Ovary (tissue), 10 donors: ENCODE measurements at regions of chr15 and their contacts with region 1.

Region 1: DNA sequence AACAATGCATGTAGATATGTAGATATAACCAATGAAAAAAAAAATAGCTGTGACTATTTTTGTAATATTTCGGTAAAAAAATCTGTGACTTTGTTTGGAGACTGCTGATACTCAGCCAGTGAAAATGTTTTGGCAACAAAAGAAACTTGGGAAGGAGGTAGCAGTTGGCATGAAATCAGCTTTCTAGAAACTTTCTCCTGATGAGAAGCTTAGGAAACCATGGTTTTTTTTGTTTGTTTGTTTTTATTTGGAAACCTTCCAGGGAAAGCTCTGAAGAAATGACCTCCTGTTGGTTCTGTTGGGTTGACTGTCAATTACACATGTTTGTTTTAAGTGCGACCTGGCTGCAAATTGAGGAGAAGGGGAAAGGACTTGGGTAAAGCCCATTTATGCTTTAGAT is 445.9 kb downstream of the UNC13C start:
- DNase-seq: no peak
- H3K4me3 ChIP-seq: no peak overlapping the region
- H3K27ac ChIP-seq: no peak overlapping the region
- H3K4me1 ChIP-seq: no peaks in the 10 kb centered on the region
- H3K27me3 ChIP-seq: no peaks in the 10 kb centered on the region
- CTCF ChIP-seq: no peak
- EP300 ChIP-seq: no peak
- POLR2A ChIP-seq: no peak

Region 2: DNA sequence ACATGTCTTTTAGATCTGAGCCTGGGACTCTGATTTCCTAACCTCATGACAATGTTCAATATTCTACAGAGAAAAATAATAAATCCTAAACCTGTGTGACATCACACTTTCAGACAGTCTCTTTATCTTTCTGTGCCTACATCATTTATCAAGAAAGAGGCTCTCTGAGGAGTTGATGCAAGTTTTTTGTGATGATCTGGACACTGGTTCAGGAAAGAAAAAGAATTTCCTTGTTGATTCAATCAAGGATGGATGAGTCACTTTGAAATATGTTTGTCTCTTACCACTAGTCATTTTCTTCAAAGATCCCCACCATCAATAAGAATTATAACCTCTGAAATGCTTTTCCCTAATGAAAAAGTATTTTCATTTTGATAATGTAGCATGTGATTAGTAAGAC is 1069.3 kb before region 1 on chr15:
- intact Hi-C with region 1: loop called in 1 of 4 experiments (anchors 5 kb)
- DNase-seq: no peak
- H3K4me3 ChIP-seq: no peak overlapping the region
- H3K27ac ChIP-seq: no peak overlapping the region
- H3K4me1 ChIP-seq: no peaks in the 10 kb centered on the region
- H3K27me3 ChIP-seq: no peaks in the 10 kb centered on the region
- CTCF ChIP-seq: no peak
- EP300 ChIP-seq: no peak
- POLR2A ChIP-seq: no peak

Region 3: DNA sequence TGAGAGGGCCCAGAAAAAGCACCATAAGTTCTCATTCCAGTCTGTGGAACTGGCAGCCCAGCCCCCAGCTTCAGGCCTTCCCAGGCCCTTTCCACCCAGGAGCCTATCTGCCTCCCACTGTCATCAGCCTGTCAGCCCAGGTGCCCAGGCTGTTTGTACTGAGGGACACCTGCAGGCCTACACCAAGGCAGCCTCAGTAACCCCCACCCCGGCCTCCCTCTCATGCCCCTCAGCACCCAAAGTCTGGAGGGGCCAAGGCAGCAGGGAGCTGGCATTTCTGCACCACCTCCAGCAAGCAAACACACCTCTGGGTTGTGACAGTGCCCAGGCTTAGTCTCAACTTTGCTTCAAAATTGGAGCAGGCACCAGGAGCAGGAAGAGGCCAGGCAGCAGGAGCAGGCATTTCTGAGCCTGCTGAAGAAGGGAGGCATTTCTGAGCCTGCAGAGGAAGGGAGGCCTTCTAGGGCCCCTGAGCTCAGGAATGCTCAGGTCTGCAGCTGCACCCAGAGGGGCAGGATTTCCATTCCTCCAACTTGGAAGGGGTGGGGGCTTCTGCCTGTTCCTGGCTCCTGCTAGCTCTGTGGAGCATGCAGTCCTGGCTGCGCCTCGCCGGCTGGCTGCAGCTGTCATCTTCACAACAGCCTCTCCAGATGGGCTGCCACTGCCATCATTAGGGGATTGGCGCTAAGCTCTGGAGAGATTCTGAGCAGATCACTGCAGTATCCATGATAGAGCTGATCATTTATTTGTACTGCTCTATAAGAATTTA is 49.8 kb before region 1 on chr15:
- intact Hi-C with region 1: no loop called
- DNase-seq: no peak
- H3K4me3 ChIP-seq: no peak overlapping the region
- H3K27ac ChIP-seq: no peak overlapping the region
- H3K4me1 ChIP-seq: no peaks in the 10 kb centered on the region
- H3K27me3 ChIP-seq: peaks cover 3% of the 10 kb centered on the region
- CTCF ChIP-seq: no peak
- EP300 ChIP-seq: no peak
- POLR2A ChIP-seq: no peak

Region 4: GRCh38 chr15:54829821-54830220 is 405.6 kb after region 1 on chr15:
- intact Hi-C with region 1: no loop called
- DNase-seq: no peak
- H3K4me3 ChIP-seq: no peak overlapping the region
- H3K27ac ChIP-seq: no peak overlapping the region
- H3K4me1 ChIP-seq: no peaks in the 10 kb centered on the region
- H3K27me3 ChIP-seq: no peaks in the 10 kb centered on the region
- CTCF ChIP-seq: no peak
- EP300 ChIP-seq: no peak
- POLR2A ChIP-seq: no peak